Endothelial cell of umbilical vein (primary cell): ENCODE measurements at regions of chr5 and their contacts with region 1.

Region 1: DNA sequence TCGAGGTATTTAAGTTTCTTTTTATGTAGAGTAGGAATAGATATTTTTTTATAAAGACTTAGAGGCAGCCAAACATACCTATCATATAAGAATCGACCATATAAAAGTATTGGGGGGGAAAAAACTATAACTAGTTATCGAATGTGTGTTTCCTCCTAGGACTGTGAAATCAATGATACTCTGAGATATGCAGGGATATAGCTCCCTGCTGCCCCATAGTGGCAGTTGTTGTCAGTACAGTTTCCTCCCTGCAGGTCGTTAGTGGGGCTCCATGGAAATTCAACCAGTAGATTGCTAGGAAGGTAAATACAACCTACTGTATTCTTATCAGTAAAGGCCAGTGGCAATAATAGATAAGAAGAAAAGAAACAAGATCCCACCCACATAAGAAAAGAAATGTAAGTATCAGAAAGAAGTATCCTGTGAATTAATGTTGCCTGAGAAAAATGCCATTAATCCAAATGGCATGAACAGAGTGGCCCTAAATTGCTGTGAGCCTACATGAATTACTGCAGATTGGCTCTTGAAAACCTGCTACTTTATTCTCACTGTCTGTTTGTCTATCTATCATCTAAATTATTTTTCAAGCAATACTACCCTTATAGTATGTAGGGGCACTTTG is 136.9 kb upstream of the FBN2 start:
- DNase-seq: peak; percentile 63
- H3K4me3 ChIP-seq: no peak overlapping the region
- H3K27ac ChIP-seq: no peak overlapping the region
- H3K4me1 ChIP-seq: no peaks in the 10 kb centered on the region
- H3K27me3 ChIP-seq: no peaks in the 10 kb centered on the region
- CTCF ChIP-seq: peak; percentile 64 to 67
- POLR2A ChIP-seq: no peak

Region 2: GRCh38 chr5:127746756-127747155 is 928.2 kb before region 1 on chr5:
- CTCF ChIA-PET with region 1: no interaction called
- POLR2A ChIA-PET with region 1: no interaction called
- dilution Hi-C with region 1: no loop called
- intact Hi-C with region 1: loop called (anchors 10 kb)
- DNase-seq: peak; percentile 27
- H3K4me3 ChIP-seq: no peak overlapping the region
- H3K27ac ChIP-seq: no peak overlapping the region
- H3K4me1 ChIP-seq: no peaks in the 10 kb centered on the region
- H3K27me3 ChIP-seq: peaks cover 7 to 9% of the 10 kb centered on the region in 2 experiments
- CTCF ChIP-seq: peak; percentile 21 to 29
- POLR2A ChIP-seq: no peak

Region 3: GRCh38 chr5:128213340-128213739 is 461.6 kb before region 1 on chr5:
- CTCF ChIA-PET with region 1: interaction called, 17 read pairs
- POLR2A ChIA-PET with region 1: no interaction called
- dilution Hi-C with region 1: no loop called
- intact Hi-C with region 1: loop called (anchors 1 kb)
- DNase-seq: peak; percentile 68
- H3K4me3 ChIP-seq: no peak overlapping the region
- H3K27ac ChIP-seq: no peak overlapping the region
- H3K4me1 ChIP-seq: no peaks in the 10 kb centered on the region
- H3K27me3 ChIP-seq: no peaks in the 10 kb centered on the region
- CTCF ChIP-seq: peak; percentile 63 to 73
- POLR2A ChIP-seq: no peak

Region 4: DNA sequence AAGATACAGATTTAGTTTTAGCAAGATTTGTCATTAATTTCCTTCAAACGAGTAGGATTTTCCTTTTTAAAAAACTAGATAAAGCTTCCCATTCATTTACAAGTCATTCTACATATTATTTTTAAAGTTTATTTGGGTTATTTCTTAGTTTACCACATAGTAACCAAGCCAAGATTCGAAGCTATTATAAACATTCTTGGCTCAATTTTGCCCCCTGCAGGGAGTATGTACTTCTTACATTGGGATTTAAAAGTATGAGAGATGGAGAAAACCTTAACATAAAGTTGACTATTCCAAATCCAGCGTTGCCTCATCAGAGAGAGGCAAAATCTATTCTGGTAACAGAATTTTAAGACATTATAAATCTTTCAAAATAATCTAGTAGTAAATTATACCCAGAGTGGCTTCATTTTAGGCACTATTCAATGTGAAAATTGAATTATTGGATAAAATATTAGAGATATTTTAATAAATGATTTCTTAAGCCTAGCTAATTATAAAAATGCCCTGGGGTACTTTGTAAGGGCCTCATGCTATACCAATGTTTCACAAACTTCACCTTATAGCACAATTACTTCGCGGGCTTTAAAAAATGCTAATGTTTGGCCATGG is 176.0 kb before region 1 on chr5:
- CTCF ChIA-PET with region 1: interaction called, 14 read pairs
- POLR2A ChIA-PET with region 1: no interaction called
- dilution Hi-C with region 1: no loop called
- intact Hi-C with region 1: loop called (anchors 2 kb)
- DNase-seq: peak; percentile 60
- H3K4me3 ChIP-seq: no peak overlapping the region
- H3K27ac ChIP-seq: no peak overlapping the region
- H3K4me1 ChIP-seq: no peaks in the 10 kb centered on the region
- H3K27me3 ChIP-seq: no peaks in the 10 kb centered on the region
- CTCF ChIP-seq: peak in 1 of 2 donors; percentile 15
- POLR2A ChIP-seq: no peak

Region 5: DNA sequence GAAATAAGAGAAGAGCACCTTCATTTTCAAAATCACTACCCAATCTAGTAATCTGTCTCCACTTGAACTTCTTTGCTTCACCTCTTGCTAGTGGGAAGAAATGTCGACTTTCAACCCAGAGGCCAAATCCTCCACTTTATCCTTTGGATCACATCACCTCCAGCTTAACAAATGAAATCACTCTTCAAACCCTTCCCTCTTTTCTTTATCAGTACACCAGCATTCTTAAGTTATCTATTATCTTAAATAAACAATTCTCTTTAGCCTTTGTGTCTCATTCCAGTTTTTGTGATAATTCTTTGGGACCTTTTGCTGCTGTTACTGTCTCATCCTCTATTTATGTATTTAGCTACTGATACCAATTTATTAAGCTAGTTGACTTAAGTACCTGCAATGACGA is 108.8 kb before region 1 on chr5:
- CTCF ChIA-PET with region 1: no interaction called
- POLR2A ChIA-PET with region 1: no interaction called
- dilution Hi-C with region 1: no loop called
- intact Hi-C with region 1: no loop called
- DNase-seq: no peak
- H3K4me3 ChIP-seq: no peak overlapping the region
- H3K27ac ChIP-seq: no peak overlapping the region
- H3K4me1 ChIP-seq: no peaks in the 10 kb centered on the region
- H3K27me3 ChIP-seq: no peaks in the 10 kb centered on the region
- CTCF ChIP-seq: no peak
- POLR2A ChIP-seq: no peak

Region 6: DNA sequence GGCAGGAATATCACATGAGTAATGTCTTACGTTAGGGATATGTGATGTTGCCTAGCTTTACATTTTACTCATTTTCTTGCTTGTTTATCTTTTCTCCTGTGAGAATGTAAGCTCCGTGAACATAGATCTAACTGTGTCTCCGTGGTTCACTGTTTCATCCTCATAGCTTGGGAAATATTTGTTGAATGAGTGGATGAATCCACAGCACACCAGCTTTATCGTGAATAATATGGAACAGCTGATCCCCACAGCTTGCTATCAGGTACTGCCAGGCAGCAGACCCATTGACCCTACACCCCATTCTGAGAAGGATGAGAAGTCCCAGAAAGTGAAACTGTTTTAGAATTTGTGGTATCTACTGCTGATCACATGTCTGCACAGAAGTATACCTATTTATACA is 30.1 kb before region 1 on chr5:
- CTCF ChIA-PET with region 1: interaction called, 11 read pairs
- POLR2A ChIA-PET with region 1: no interaction called
- dilution Hi-C with region 1: no loop called
- intact Hi-C with region 1: no loop called
- DNase-seq: peak; percentile 86
- H3K4me3 ChIP-seq: peak overlapping the region in 2 of 3 experiments; percentile 24 to 50
- H3K27ac ChIP-seq: peak overlapping the region; percentile 57
- H3K4me1 ChIP-seq: peaks cover 20% of the 10 kb centered on the region
- H3K27me3 ChIP-seq: no peaks in the 10 kb centered on the region
- CTCF ChIP-seq: no peak
- POLR2A ChIP-seq: no peak

Region 7: DNA sequence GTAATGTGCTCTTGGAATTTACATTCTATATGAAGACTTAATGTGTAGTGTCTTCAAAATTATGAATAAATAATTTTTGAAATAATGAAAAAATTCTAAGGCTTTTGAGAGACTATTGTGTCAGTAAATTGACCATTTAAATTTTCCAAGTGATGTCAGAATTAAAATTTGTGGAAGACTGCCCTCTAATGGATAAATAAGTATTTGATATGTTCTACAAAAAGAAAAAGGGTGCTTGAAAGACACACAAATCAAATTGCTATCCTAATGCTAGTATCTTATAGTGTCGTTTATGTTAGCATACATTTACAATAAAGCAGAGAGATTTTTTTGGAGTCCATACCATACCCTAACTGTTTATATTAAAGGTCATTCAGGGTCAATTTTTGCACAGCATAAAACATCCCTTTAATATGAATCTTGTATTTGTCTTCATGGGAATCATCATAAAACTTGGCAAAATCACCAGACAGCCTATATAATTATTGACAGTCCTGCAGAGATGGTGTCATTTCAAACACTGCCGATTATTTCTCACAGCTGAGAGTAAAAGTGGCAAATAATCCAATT is 169.5 kb after region 1 on chr5:
- CTCF ChIA-PET with region 1: interaction called, 35 read pairs
- POLR2A ChIA-PET with region 1: no interaction called
- dilution Hi-C with region 1: no loop called
- intact Hi-C with region 1: loop called (anchors 2 kb)
- DNase-seq: peak; percentile 53
- H3K4me3 ChIP-seq: no peak overlapping the region
- H3K27ac ChIP-seq: no peak overlapping the region
- H3K4me1 ChIP-seq: no peaks in the 10 kb centered on the region
- H3K27me3 ChIP-seq: no peaks in the 10 kb centered on the region
- CTCF ChIP-seq: peak in 1 of 2 donors; percentile 1
- POLR2A ChIP-seq: no peak